Heart right ventricle (tissue), 16 donors: ENCODE measurements at regions of chr12 and their contacts with region 1.

Region 1: DNA sequence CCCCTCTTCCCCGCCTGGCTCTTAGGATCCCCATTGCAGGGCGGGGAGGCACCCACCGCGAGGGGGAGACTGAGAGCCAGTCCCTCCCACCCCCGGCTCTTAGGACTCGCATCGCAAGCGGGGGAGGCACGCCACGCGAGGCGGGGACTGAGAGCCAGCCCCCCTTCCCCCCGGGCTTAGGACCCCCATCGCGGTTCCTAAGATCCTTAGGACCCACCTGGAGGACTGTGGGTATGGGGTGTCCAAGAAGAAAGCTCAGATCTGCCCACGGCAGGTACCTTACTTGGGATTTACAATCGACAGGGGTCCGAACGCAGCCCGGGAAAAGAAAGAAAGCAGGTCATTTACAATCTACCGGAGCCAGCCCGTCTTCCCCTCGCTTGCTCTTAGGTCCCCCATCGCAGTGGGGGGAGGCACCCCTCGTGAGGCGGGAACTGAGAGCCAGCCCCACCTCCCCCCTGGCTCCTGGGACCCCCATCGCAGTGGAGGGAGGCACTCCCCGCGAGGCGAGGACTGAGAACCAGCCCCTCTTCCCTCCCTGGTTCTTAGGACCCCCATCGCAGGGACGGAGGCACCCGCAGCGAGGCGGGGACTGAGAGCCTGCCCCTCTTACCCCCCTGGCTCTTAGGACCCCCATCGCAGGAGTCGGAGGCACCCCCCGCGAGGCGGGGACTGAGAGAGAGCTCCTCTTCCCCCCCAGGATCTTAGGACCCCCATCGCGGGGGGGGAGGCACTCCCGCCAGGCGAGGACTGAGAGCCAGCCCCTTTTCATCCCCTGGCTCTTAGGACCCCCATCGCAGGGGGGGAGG is 43.7 kb downstream of the DDX11 start:
- DNase-seq: no peak
- ATAC-seq: peak in 5 of 8 donors; percentile 36 to 75 (median 52)
- H3K4me3 ChIP-seq: peak overlapping the region in 7 of 10 donors; percentile 26 to 49 (median 38)
- H3K27ac ChIP-seq: no peak overlapping the region
- H3K4me1 ChIP-seq: peaks cover 0 to 29% (median 19%) of the 10 kb centered on the region in 9 donors
- H3K27me3 ChIP-seq: peaks cover 0 to 58% (median 33%) of the 10 kb centered on the region in 7 donors
- CTCF ChIP-seq: peak in 7 of 9 donors; percentile 19 to 61 (median 46)

Region 2: GRCh38 chr12:31238764-31239387 is 121.5 kb after region 1 on chr12:
- intact Hi-C with region 1: loop called in 2 of 10 experiments (anchors 10 kb)
- DNase-seq: peak; percentile 32 to 36
- ATAC-seq: peak in 7 of 8 donors; percentile 56 to 79 (median 65)
- H3K4me3 ChIP-seq: no peak overlapping the region
- H3K27ac ChIP-seq: no peak overlapping the region
- H3K4me1 ChIP-seq: peaks cover 0 to 6% (median 0%) of the 10 kb centered on the region in 9 donors
- H3K27me3 ChIP-seq: peaks cover 0 to 51% (median 34%) of the 10 kb centered on the region in 7 donors
- CTCF ChIP-seq: peak; percentile 42 to 74 (median 69)

Region 3: DNA sequence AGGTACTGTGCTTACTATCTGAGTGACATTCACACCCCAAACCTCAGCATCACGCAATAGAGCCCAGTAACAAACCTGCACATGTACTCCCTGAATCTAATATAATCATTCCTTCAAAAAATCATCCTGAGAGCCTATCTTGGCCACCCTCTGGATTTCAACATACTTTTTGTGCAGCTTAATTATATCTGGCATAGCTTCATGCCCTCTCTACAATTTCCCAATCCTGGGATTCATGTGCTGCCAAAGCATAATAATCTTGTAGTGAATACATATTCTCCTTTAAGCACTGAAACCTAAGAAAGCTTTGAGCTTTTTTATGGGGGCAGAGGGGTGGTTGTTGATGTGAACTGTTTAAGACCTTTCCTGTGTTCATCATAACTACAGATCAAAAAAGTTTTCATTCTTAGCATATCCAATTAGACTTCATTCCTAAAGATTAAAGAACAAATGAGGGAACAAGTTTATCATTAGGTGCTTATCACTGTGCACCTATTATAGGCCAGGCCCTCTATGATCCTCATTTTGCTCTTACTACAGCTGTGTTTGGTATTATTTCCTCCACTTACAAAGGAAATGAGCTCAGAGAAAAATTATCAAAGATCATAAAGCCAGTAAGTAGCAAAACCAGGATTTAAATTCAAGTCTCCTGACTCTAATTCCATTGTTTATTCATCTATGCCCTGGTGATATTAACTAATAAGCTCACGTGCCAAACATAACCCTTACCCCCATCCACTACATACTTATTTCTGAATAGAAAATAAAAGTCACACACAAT is 157.3 kb after region 1 on chr12:
- intact Hi-C with region 1: loop called in 1 of 10 experiments (anchors 5 kb)
- DNase-seq: no peak
- ATAC-seq: no peak
- H3K4me3 ChIP-seq: no peak overlapping the region
- H3K27ac ChIP-seq: no peak overlapping the region
- H3K4me1 ChIP-seq: no peaks in the 10 kb centered on the region
- H3K27me3 ChIP-seq: no peaks in the 10 kb centered on the region
- CTCF ChIP-seq: no peak

Region 4: GRCh38 chr12:31362759-31363415 is 245.5 kb after region 1 on chr12:
- intact Hi-C with region 1: no loop called
- DNase-seq: no peak
- ATAC-seq: peak in 5 of 8 donors; percentile 35 to 63 (median 45)
- H3K4me3 ChIP-seq: no peak overlapping the region
- H3K27ac ChIP-seq: no peak overlapping the region
- H3K4me1 ChIP-seq: no peaks in the 10 kb centered on the region
- H3K27me3 ChIP-seq: peaks cover 0 to 3% (median 0%) of the 10 kb centered on the region in 7 donors
- CTCF ChIP-seq: no peak

Region 5: GRCh38 chr12:31524791-31525495 is 407.5 kb after region 1 on chr12:
- intact Hi-C with region 1: loop called in 1 of 10 experiments (anchors 5 kb)
- DNase-seq: no peak
- ATAC-seq: no peak
- H3K4me3 ChIP-seq: no peak overlapping the region
- H3K27ac ChIP-seq: no peak overlapping the region
- H3K4me1 ChIP-seq: peaks cover 0 to 70% (median 17%) of the 10 kb centered on the region in 9 donors
- H3K27me3 ChIP-seq: no peaks in the 10 kb centered on the region
- CTCF ChIP-seq: no peak